Transverse colon (tissue), 4 donors: ENCODE measurements at regions of chr15 and their contacts with region 1.

Region 1: DNA sequence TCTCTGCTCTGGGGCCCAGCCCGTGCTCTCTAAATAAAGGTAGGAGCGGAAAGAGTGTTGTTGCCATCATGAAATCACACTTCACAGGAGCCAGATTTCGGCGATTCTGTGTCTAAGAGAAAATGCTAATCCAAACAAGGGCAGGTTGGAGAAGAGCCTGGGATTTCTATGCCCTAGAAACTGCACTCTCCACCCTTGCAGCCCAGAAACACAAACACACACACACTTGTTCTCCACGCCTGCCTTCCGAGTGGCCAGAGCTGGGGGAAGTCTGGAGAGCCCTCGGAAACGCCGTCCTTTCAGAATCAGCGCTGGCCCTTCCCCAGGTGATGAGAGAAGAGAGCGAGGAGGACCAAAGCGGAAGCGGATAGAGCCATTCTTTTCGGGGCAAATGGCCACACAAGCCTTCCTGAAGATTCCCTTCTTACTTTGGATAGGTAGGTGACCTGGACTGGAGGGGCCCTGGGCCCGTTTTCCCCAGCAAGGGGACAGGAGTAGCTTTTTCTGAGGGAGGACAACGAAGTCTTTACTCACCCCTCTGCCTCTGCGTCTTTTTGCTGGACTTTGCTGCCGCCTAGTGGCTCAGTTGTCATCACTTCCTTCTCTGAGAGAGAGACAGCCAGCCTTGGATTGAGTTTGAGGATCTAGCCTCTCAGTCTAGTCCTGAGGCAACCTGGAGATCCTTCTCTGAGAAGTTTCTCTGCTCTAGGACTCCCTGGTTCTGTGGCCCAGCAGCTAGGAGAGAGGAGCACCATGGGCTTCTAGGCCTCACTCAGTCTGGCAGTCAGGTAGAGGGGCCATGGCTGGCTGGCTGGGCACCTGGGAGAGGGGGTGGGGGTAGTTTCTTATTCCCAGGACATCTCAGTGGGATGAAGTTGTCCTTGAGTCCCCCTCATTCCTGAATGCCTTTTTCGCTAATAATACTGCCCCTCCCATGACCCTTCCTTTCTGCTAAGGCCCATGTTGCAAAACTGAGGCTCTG is 37.7 kb downstream of the SENP8 start:
- DNase-seq: peak; percentile 93
- H3K4me3 ChIP-seq: peak overlapping the region; percentile 23 to 63 (median 43)
- H3K27ac ChIP-seq: peak overlapping the region; percentile 80 to 83 (median 81)
- H3K4me1 ChIP-seq: peaks cover 0 to 31% (median 10%) of the 10 kb centered on the region in 4 donors
- H3K27me3 ChIP-seq: no peaks in the 10 kb centered on the region
- CTCF ChIP-seq: peak; percentile 76 to 95 (median 79)
- EP300 ChIP-seq: no peak
- POLR2A ChIP-seq: no peak

Region 2: DNA sequence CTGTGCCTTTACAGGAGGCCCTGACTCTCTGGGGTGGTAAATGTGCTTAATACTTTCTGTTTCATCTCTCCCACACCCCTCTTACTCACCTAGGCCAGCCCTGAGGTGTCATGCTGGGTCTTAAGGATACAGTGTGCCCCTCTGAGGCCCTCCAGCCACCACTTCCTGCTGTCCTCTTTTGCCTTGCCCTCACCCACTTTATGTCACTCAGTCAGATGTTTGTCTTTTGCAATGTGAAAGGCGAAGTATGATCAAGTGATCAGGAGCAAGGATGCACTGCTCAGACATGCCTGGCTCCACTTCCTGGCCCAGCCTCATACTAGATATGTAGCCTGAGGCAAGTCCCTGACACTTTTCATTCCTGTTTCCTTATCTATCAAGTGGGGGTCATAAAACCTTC is 684.6 kb before region 1 on chr15:
- in situ Hi-C with region 1: loop called in 1 of 4 experiments (anchors 25 kb)
- intact Hi-C with region 1: no loop called
- DNase-seq: no peak
- H3K4me3 ChIP-seq: no peak overlapping the region
- H3K27ac ChIP-seq: no peak overlapping the region
- H3K4me1 ChIP-seq: no peaks in the 10 kb centered on the region
- H3K27me3 ChIP-seq: no peaks in the 10 kb centered on the region
- CTCF ChIP-seq: no peak
- EP300 ChIP-seq: no peak
- POLR2A ChIP-seq: no peak

Region 3: GRCh38 chr15:71743861-71744382 is 412.0 kb before region 1 on chr15:
- in situ Hi-C with region 1: no loop called
- intact Hi-C with region 1: loop called (anchors 10 kb)
- DNase-seq: peak; percentile 67
- H3K4me3 ChIP-seq: no peak overlapping the region
- H3K27ac ChIP-seq: no peak overlapping the region
- H3K4me1 ChIP-seq: peaks cover 0 to 28% (median 15%) of the 10 kb centered on the region in 4 donors
- H3K27me3 ChIP-seq: no peaks in the 10 kb centered on the region
- CTCF ChIP-seq: peak; percentile 75 to 85 (median 76)
- EP300 ChIP-seq: no peak
- POLR2A ChIP-seq: no peak

Region 4: GRCh38 chr15:71752604-71753289 is 403.2 kb before region 1 on chr15:
- in situ Hi-C with region 1: loop called in 2 of 4 experiments (anchors 10 to 25 kb)
- intact Hi-C with region 1: loop called (anchors 10 kb)
- DNase-seq: peak; percentile 84
- H3K4me3 ChIP-seq: no peak overlapping the region
- H3K27ac ChIP-seq: peak overlapping the region; percentile 51 to 75 (median 65)
- H3K4me1 ChIP-seq: peaks cover 2 to 70% (median 23%) of the 10 kb centered on the region in 4 donors
- H3K27me3 ChIP-seq: no peaks in the 10 kb centered on the region
- CTCF ChIP-seq: peak; percentile 23 to 76 (median 52)
- EP300 ChIP-seq: no peak
- POLR2A ChIP-seq: no peak

Region 5: DNA sequence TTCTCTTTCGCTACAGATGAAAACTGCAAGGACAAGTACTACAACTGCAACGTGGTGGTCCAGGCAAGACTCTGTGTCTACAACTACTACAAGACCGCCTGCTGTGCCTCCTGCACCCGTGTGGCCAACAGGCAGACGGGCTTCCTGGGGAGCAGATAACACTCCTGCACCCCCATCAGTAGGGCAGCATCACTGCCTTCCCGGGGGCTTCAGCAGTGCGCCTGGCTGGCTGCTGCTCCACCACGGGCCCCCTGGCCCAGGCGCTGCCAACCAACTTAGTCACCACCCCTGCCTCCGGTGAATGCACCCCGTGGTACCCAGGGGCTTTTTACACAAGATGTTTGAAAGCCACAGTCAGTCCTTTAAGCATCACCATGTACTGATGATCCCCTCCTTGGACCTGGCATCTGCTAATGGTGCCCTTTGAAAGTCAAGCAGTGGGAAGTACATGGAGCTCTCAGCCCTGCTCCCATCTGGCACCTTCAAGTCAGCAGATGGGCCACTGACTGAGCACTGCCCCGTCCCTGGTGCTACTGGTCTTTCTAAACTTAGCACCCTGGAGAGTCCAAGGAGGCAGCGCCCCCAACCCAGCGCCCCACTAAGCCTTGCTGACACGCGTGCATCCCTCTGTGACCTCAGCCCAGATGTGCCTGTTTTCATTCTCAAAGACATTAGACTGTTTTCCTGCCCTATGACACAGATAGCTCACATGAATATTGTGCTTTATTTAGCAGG is 378.5 kb before region 1 on chr15:
- in situ Hi-C with region 1: loop called in 2 of 4 experiments (anchors 10 to 25 kb)
- intact Hi-C with region 1: no loop called
- DNase-seq: no peak
- H3K4me3 ChIP-seq: no peak overlapping the region
- H3K27ac ChIP-seq: no peak overlapping the region
- H3K4me1 ChIP-seq: peaks cover 0 to 12% (median 6%) of the 10 kb centered on the region in 4 donors
- H3K27me3 ChIP-seq: no peaks in the 10 kb centered on the region
- CTCF ChIP-seq: no peak
- EP300 ChIP-seq: no peak
- POLR2A ChIP-seq: no peak

Region 6: DNA sequence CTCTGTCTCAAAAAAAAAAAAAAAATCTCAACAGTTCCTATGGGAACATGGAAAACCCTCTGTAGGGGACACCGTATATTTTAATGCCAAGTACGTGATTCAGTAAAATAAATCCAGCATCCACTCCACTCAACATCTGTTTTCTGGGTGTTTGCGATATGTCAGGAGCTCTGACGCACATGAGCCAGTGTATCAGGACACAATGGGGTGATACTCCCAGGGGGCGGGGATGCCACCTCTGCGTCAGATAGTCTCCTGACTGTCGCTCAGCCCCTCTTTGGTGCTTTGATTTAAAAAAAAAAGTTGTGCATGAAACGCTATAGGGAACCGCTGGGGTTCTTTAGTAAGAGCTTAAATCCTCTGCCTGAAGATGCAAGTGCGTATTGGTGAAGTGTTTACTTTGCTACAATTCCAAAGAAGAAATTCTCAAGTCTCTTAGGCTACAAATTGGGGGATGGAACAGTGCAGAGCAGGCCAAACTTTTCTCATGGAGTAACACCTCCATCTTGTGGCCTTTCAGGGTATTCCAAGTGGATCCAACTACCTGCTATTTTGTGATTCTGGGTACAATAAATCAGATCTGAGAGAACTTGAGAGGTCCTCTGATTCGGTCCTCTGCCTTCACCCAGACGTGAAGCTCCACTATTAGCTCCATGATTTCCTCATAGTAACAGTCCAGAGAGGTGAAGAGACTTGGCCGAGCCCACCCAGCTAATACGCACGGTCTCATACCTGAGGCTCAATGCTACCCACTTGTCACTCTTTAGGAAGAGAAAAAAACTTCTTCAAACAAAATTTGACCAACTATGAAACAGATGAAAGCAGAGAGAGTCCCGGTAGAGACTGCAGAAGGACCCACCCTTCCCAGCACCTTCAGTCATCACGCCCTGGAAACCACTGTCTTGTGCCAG is 354.8 kb before region 1 on chr15:
- in situ Hi-C with region 1: loop called in 1 of 4 experiments (anchors 25 kb)
- intact Hi-C with region 1: no loop called
- DNase-seq: peak; percentile 55
- H3K4me3 ChIP-seq: no peak overlapping the region
- H3K27ac ChIP-seq: no peak overlapping the region
- H3K4me1 ChIP-seq: peaks cover 0 to 8% (median 5%) of the 10 kb centered on the region in 4 donors
- H3K27me3 ChIP-seq: no peaks in the 10 kb centered on the region
- CTCF ChIP-seq: peak; percentile 77 to 96 (median 81)
- EP300 ChIP-seq: no peak
- POLR2A ChIP-seq: no peak

Region 7: DNA sequence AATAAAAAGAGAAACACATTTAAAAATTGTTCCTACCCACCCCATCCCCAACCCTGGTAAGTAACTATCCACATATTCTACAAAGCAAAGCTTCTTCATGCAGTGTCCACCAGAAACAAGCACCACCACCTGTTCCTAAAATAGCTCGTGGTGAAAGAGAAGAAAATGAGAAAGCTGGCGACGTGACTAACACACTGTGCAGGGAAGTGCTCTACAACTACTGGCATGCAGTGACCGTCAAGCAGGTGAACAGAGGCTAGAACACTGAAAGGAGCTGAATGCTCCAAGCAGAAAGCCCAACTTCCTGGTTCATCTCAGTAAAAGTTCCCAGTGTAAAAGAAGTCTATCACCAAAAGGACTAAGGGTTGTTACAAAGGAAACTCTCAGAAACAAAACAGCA is 264.9 kb before region 1 on chr15:
- in situ Hi-C with region 1: loop called in 1 of 4 experiments (anchors 25 kb)
- intact Hi-C with region 1: no loop called
- DNase-seq: no peak
- H3K4me3 ChIP-seq: no peak overlapping the region
- H3K27ac ChIP-seq: no peak overlapping the region
- H3K4me1 ChIP-seq: peaks cover 0 to 14% (median 5%) of the 10 kb centered on the region in 4 donors
- H3K27me3 ChIP-seq: no peaks in the 10 kb centered on the region
- CTCF ChIP-seq: no peak
- EP300 ChIP-seq: no peak
- POLR2A ChIP-seq: no peak

Region 8: DNA sequence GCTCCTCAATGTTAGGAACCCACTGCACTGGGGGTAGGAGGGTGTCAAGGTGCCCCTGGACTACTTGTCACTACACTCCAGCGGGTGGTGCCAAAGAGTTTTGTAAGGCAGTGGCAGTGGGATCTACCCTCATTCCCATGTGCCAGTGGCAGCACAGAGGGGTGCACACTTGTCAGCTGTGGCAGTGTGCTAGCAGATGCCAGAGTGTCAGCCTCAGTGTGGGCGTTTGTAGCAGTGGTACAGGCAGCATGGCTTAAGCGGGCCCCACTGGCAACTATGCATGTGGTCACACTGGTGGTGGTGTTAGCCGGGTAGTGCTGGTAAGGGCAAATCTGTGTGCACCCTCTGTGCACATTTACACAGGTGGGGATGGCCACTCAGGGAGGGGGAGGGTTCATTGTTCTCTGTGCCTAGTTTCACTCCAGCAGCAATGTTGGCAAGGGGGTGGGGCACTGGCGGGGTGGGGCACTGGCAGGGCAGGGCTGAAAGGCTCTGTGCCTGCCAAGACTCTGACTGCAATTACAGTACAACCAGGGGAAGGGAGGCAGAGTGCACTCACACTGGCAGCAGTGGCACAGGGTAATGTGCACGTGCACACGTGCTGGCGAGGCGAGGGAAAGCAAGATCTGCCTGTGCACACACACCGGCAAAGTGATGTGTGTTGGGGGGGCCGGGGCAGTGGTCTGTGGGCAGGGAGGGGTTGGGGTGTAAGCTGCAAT is 69.8 kb before region 1 on chr15:
- in situ Hi-C with region 1: no loop called
- intact Hi-C with region 1: no loop called
- DNase-seq: peak; percentile 61
- H3K4me3 ChIP-seq: no peak overlapping the region
- H3K27ac ChIP-seq: no peak overlapping the region
- H3K4me1 ChIP-seq: peaks cover 0 to 5% (median 0%) of the 10 kb centered on the region in 4 donors
- H3K27me3 ChIP-seq: no peaks in the 10 kb centered on the region
- CTCF ChIP-seq: no peak
- EP300 ChIP-seq: no peak
- POLR2A ChIP-seq: no peak